ENCODE measurements at regions of chr11 and their contacts with region 1.

Region 1: DNA sequence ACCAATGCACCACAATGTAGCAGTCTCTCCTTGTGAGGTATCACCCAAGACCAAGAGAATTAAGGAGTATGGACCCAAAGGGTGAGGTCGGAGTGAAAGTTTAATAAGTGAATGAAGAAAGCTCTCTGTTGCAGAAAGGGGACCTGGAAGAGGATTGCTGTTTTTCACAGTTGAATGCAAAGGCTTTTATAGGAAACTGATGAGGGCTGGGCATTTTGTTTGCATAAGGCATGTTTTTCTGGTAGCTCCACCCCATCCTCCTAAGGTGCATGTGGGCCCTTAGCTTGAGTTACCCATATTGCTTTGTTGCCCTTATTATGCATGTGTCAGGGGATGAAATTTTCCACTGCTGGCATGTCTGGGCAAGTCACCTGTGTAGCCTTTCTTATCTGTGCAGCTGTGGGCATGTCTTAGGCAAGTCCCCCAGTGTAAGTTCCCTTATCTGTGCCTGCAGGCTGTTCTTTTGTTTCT is 64.7 kb downstream of the BDNF start:
- DNase-seq: peak in 1 of 2 experiments; percentile 51
- H3K4me3 ChIP-seq: peak overlapping the region in 3 of 4 experiments; percentile 17 to 50 (median 31); a peak in 2 of 8 replicates
- H3K27ac ChIP-seq: peak overlapping the region; percentile 74
- H3K4me1 ChIP-seq: peaks cover 6 to 17% (median 14%) of the 10 kb centered on the region in 4 experiments; a peak in 6 of 7 replicates
- H3K27me3 ChIP-seq: no peaks in the 10 kb centered on the region; a peak in 1 of 7 replicates
- CTCF ChIP-seq: no peak
- EP300 ChIP-seq: no peak
- POLR2A ChIP-seq: peak; percentile 84 to 85
- RAD21 ChIP-seq: no peak

Region 2: GRCh38 chr11:27612932-27613880 is 22.4 kb before region 1 on chr11:
- CTCF ChIA-PET with region 1: interaction called, 3 read pairs
- POLR2A ChIA-PET with region 1: interaction called, 14 read pairs
- DNase-seq: no peak
- H3K4me3 ChIP-seq: no peak overlapping the region
- H3K27ac ChIP-seq: no peak overlapping the region
- H3K4me1 ChIP-seq: no peaks in the 10 kb centered on the region
- H3K27me3 ChIP-seq: no peaks in the 10 kb centered on the region
- CTCF ChIP-seq: no peak
- EP300 ChIP-seq: no peak
- POLR2A ChIP-seq: peak; percentile 34 to 81
- RAD21 ChIP-seq: no peak

Region 3: DNA sequence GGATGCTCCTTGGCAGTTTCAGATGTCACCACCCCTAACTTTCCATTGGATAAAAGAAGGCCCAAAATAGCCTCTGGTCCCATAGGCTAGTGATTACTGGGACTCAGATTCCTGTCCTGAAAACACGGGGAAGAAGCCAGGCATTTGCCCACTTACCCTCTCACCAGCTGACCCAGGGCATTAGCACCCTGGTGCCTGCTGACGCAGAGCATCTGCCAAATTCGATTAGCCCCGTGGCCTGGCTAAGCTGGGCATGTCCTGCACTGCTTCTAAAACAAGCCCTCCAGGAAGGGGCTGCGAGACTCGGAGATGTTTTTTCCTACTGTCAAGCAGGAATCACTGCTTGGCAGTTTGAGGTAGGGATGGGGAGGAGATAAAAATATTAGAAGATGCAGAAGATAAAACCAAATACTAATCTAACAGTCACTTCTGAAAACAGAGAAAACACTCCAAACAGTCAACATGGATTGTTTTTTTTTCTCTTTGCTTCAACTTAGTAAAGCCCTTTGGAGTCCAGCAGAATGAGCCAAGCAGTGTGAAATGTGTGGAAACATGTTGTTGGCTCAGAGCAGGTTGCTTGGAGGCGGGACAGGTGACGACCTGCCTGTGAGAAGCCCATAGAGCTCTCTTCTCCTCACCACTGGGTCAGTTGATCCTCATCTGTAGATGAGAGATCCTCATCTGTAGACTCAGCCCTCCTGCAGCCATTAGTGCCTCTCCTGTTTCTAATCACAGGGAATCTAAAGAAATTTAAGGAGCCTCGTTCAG is 10.6 kb after region 1 on chr11:
- CTCF ChIA-PET with region 1: interaction called, 9 read pairs
- POLR2A ChIA-PET with region 1: interaction called, 14 read pairs
- DNase-seq: no peak
- H3K4me3 ChIP-seq: no peak overlapping the region
- H3K27ac ChIP-seq: no peak overlapping the region
- H3K4me1 ChIP-seq: peaks cover 2 to 13% (median 3%) of the 10 kb centered on the region in 4 experiments; a peak in 4 of 7 replicates
- H3K27me3 ChIP-seq: no peaks in the 10 kb centered on the region; a peak in 1 of 7 replicates
- CTCF ChIP-seq: no peak
- EP300 ChIP-seq: no peak
- POLR2A ChIP-seq: no peak
- RAD21 ChIP-seq: no peak

Region 4: GRCh38 chr11:27663294-27663693 is 27.7 kb after region 1 on chr11:
- CTCF ChIA-PET with region 1: interaction called, 4 read pairs
- POLR2A ChIA-PET with region 1: interaction called, 14 read pairs
- DNase-seq: no peak
- H3K4me3 ChIP-seq: no peak overlapping the region
- H3K27ac ChIP-seq: no peak overlapping the region
- H3K4me1 ChIP-seq: peaks cover 0 to 5% (median 2%) of the 10 kb centered on the region in 4 experiments; a peak in 4 of 7 replicates
- H3K27me3 ChIP-seq: no peaks in the 10 kb centered on the region
- CTCF ChIP-seq: no peak
- EP300 ChIP-seq: no peak
- POLR2A ChIP-seq: no peak
- RAD21 ChIP-seq: no peak

Region 5: GRCh38 chr11:27698872-27699474 is 63.4 kb after region 1 on chr11:
- CTCF ChIA-PET with region 1: interaction called, 7 read pairs
- POLR2A ChIA-PET with region 1: interaction called, 26 read pairs
- DNase-seq: peak; percentile 83 to 97
- H3K4me3 ChIP-seq: peak overlapping the region; percentile 61 to 95 (median 83)
- H3K27ac ChIP-seq: no peak overlapping the region; the same call in 1 of the 2 replicates
- H3K4me1 ChIP-seq: peaks cover 1 to 18% (median 3%) of the 10 kb centered on the region in 4 experiments; a peak in 4 of 7 replicates
- H3K27me3 ChIP-seq: peaks cover 8 to 28% (median 20%) of the 10 kb centered on the region in 4 experiments
- CTCF ChIP-seq: peak; percentile 72 to 89 (median 73)
- EP300 ChIP-seq: no peak
- POLR2A ChIP-seq: no peak
- RAD21 ChIP-seq: peak; percentile 87 to 90

Region 6: GRCh38 chr11:27720277-27720830 is 84.8 kb after region 1 on chr11:
- CTCF ChIA-PET with region 1: interaction called, 3 read pairs
- POLR2A ChIA-PET with region 1: interaction called, 20 read pairs
- DNase-seq: peak in 1 of 2 experiments; percentile 86
- H3K4me3 ChIP-seq: peak overlapping the region; percentile 63 to 99 (median 78)
- H3K27ac ChIP-seq: no peak overlapping the region
- H3K4me1 ChIP-seq: peaks cover 5 to 15% (median 10%) of the 10 kb centered on the region in 4 experiments
- H3K27me3 ChIP-seq: peaks cover 7 to 29% (median 25%) of the 10 kb centered on the region in 4 experiments
- CTCF ChIP-seq: peak; percentile 28 to 34 (median 29); a peak in 3 of 4 replicates
- EP300 ChIP-seq: no peak
- POLR2A ChIP-seq: no peak
- RAD21 ChIP-seq: peak; percentile 8 to 25; a peak in 3 of 4 replicates

Measured in H1 (cell line).